ENCODE measurements at regions of chr17 and their contacts with region 1.

Region 1: DNA sequence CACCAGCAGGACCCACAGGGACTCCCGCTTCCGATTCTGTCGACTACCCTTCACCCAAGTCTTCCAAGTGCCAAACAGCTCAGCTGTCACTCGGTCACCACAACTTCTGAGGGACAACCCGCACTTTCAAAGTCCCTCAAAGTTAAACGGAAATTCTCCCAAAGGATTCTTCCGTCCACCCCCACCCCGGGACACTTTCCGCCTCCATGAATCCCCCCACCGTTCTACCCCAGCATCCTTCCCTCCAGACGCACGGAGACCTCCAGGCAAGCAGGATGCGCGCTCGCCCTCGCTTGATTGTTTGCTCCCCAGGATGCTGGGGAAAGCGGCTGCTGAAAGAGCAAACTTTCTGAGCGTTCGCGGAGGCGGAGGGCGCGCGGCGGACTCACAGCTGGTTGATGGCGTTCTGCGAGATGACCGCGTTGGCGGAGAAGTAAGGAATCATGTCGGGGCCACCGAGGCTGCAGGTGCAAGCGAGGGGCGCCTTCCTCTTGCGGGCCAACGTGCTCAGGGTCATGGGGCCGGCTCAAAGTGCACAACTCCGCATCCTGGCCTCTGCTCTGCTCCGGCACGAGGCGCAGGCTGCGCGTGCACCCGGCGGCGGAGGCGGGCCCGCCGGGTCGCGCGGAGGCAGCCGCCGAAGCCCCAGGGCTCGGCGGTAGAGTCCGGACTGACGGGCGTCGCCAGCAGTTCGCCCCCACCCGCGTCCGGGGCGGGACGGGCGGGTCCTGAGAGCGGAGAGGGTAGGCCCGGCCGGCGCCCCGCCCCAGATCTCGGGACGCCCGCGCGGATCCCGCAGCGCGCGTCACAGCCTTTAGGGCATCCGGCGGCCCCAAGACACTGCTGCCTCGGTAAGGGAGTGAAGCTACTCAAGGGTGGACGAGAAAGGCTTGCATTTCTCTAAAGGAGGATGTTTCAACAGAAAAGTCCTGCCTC is 138.3 kb upstream of the CORO6 start:
- DNase-seq: peak; percentile 86
- H3K4me3 Mint-ChIP-seq: peak overlapping the region; percentile 89
- H3K27ac Mint-ChIP-seq: peak overlapping the region; percentile 3
- H3K4me1 Mint-ChIP-seq: peaks cover 16% of the 10 kb centered on the region
- H3K27me3 Mint-ChIP-seq: no peaks in the 10 kb centered on the region
- CTCF ChIP-seq: no peak

Region 2: DNA sequence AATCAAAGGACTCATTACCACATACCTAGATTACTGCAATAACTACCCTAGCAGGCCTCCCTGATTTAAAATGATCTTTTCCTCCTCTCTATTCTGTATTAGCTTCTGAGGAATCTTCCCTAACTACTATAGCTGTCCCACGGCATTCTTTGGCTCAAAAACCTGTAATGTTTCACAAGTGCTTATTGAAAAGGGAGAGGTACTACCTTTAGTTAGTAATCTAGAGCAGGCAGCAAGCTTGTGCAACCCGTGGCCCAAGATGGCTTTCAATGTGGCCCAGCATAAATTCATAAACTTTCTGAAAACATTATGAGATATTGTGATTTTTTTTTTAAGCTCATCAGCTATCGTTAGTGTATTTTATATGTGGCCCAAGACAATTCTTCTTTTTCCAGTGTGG is 67.3 kb before region 1 on chr17:
- CTCF ChIA-PET with region 1: no interaction called
- POLR2A ChIA-PET with region 1: no interaction called
- intact Hi-C with region 1: loop called (anchors 2 kb)
- DNase-seq: no peak
- H3K4me3 Mint-ChIP-seq: no peak overlapping the region
- H3K27ac Mint-ChIP-seq: no peak overlapping the region
- H3K4me1 Mint-ChIP-seq: no peaks in the 10 kb centered on the region
- H3K27me3 Mint-ChIP-seq: no peaks in the 10 kb centered on the region
- CTCF ChIP-seq: no peak

Region 3: DNA sequence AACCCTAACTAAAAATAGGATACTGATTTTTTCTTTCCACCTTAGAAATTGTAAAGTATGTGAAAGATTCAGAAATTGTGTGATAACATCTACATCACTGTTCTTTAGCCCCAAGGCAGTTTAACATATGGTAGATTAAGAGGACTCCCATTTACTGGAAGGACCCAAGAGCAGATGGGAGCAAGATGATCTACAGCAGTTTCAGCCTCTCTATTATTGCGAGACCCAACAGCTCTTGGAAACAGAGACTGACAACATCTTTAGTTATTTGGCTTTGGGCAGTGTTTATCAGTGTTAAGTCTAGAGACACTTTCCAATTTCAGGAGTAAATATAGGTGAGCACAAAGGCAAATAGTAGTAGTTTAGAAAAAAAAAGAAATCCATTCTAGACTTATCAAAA is 13.4 kb before region 1 on chr17:
- CTCF ChIA-PET with region 1: interaction called, 4 read pairs
- POLR2A ChIA-PET with region 1: interaction called, 15 read pairs
- intact Hi-C with region 1: no loop called
- DNase-seq: no peak
- H3K4me3 Mint-ChIP-seq: no peak overlapping the region
- H3K27ac Mint-ChIP-seq: no peak overlapping the region
- H3K4me1 Mint-ChIP-seq: peaks cover 19% of the 10 kb centered on the region
- H3K27me3 Mint-ChIP-seq: no peaks in the 10 kb centered on the region
- CTCF ChIP-seq: no peak

Region 4: DNA sequence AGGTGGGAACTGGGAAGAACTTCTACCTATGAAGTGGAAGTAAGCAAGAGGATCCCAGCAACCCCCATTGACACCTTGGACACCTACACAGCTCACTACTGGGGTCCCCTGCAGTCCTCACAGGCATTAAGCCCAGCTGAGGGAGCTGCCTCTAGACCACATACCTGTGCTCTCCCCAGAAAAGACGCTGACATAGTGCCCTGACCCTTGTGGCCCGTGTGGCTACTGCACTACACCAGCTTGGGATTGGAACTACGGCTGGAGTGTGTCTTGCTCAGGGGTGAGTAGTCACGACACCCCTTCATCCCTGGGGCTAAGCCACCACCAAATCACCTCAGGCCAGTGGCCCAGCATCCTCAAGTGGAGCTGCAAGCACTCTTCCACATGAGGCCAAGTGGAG is 301.3 kb after region 1 on chr17:
- CTCF ChIA-PET with region 1: no interaction called
- POLR2A ChIA-PET with region 1: no interaction called
- intact Hi-C with region 1: no loop called
- DNase-seq: no peak
- H3K4me3 Mint-ChIP-seq: no peak overlapping the region
- H3K27ac Mint-ChIP-seq: no peak overlapping the region
- H3K4me1 Mint-ChIP-seq: no peaks in the 10 kb centered on the region
- H3K27me3 Mint-ChIP-seq: peaks cover 53% of the 10 kb centered on the region
- CTCF ChIP-seq: no peak

Measured in MCF 10A (cell line).